B cell (primary cell): ENCODE measurements at regions of chr19 and their contacts with region 1.

Region 1: GRCh38 chr19:44093931-44094765 is at the start of gene ZNF224:
- DNase-seq: peak; percentile 87
- ATAC-seq: peak; percentile 94
- H3K4me3 ChIP-seq: peak within 1 kb of the TSS; percentile 67 to 95 (median 89)
- H3K4me3 Mint-ChIP-seq: peak within 1 kb of the TSS; percentile 96
- H3K27ac ChIP-seq: peak within 1 kb of the TSS; percentile 39 to 70
- H3K27ac Mint-ChIP-seq: peak within 1 kb of the TSS; percentile 90
- H3K4me1 ChIP-seq: peaks cover 4 to 9% of the 10 kb centered on the region in 2 donors
- H3K4me1 Mint-ChIP-seq: peaks cover 22% of the 10 kb centered on the region
- H3K27me3 ChIP-seq: no peaks in the 10 kb centered on the region
- H3K27me3 Mint-ChIP-seq: no peaks in the 10 kb centered on the region
- CTCF ChIP-seq: no peak
- total RNA-seq, gene ZNF224: 94.2 and 96.1 TPM in 2 replicates

Region 2: DNA sequence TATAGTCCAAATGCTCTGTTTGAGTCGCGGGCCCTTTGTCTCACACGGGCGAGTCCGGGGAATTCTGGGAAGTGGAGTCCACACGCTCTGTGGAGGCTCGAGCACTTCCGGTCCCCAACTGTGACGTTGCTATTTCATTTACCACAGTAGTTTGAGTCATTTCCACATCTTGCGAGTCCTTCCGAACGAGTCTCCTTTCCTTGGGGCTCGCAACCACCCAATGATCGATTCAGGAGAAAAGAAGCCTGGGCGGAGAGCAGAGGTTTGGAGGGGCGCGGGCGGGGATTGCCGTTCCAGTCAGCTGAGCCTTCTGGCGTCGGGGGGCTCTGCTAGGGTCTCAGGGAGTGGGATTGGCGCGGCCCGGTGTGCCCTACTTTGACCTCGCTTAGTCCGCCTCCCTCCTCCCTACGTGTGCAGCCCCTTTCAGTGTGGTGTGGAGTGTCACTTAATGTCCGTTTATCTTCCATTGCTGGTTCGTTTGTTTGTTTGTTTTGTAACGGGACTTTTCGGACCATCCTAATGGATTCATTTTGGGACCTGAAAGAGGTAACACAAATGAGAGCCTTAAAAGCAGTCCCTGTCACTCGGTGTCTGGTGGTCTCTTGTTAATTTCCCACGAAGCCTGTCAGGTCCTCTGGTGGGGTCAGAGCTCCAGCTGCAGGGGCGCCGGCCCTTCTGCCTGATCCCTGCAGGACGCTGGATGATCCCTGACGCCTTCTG is 68.8 kb before region 1 on chr19 and contains the start of gene ZNF222:
- CTCF ChIA-PET with region 1: no interaction called
- POLR2A ChIA-PET with region 1: no interaction called
- intact Hi-C with region 1: loop called (anchors 1 kb)
- DNase-seq: peak; percentile 83
- ATAC-seq: peak; percentile 97
- H3K4me3 ChIP-seq: peak within 1 kb of the TSS; percentile 72 to 98 (median 84)
- H3K4me3 Mint-ChIP-seq: peak within 1 kb of the TSS; percentile 96
- H3K27ac ChIP-seq: peak within 1 kb of the TSS; percentile 38 to 66
- H3K27ac Mint-ChIP-seq: peak within 1 kb of the TSS; percentile 88
- H3K4me1 ChIP-seq: peaks cover 11 to 13% of the 10 kb centered on the region in 2 donors
- H3K4me1 Mint-ChIP-seq: peaks cover 19% of the 10 kb centered on the region
- H3K27me3 ChIP-seq: no peaks in the 10 kb centered on the region
- H3K27me3 Mint-ChIP-seq: peaks cover 8% of the 10 kb centered on the region
- CTCF ChIP-seq: no peak
- total RNA-seq, gene ZNF222: 7.5 and 9.1 TPM in 2 replicates

Region 3: DNA sequence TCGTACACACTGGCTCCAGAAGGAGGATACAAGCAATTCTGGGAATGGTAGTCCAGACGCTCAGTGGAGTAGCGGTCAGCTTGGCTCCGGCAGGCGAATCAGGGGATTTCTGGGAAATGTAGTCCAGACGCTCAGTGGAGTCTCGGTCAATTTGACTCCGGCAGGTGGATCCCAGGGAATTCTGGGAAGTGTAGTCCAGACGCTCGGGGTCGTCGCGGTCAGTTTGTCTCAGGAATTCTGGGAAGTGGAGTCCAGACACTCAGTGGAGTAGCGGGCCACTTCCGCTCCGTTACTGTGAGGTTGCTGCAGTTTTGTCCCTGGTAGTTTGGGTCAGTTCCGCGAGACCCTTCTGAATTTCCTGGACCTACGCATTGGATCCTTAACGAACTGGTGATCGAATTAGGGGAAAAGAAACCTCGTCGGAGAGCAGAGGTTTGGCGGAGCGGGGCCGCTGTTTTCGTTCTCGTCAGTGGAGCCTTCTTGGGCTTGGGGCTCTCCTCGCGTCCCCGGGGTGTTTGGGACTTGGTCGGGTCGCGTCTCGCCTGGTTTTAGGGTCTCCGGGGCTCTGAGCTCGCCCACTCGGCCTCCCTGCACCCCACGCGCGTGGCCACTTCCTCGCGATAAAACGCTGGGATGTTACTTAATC is 19.1 kb after region 1 on chr19 and contains the start of gene ZNF225:
- CTCF ChIA-PET with region 1: interaction called, 3 read pairs
- POLR2A ChIA-PET with region 1: interaction called, 3 read pairs
- intact Hi-C with region 1: loop called (anchors 1 kb)
- DNase-seq: peak; percentile 91
- ATAC-seq: peak; percentile 95
- H3K4me3 ChIP-seq: peak within 1 kb of the TSS; percentile 71 to 98 (median 86)
- H3K4me3 Mint-ChIP-seq: peak within 1 kb of the TSS; percentile 99
- H3K27ac ChIP-seq: peak within 1 kb of the TSS; percentile 45 to 65
- H3K27ac Mint-ChIP-seq: peak within 1 kb of the TSS; percentile 90
- H3K4me1 ChIP-seq: peaks cover 9 to 19% of the 10 kb centered on the region in 2 donors
- H3K4me1 Mint-ChIP-seq: peaks cover 28% of the 10 kb centered on the region
- H3K27me3 ChIP-seq: no peaks in the 10 kb centered on the region
- H3K27me3 Mint-ChIP-seq: no peaks in the 10 kb centered on the region
- CTCF ChIP-seq: no peak
- total RNA-seq, gene ZNF225: 12.1 and 13.1 TPM in 2 replicates

Region 4: DNA sequence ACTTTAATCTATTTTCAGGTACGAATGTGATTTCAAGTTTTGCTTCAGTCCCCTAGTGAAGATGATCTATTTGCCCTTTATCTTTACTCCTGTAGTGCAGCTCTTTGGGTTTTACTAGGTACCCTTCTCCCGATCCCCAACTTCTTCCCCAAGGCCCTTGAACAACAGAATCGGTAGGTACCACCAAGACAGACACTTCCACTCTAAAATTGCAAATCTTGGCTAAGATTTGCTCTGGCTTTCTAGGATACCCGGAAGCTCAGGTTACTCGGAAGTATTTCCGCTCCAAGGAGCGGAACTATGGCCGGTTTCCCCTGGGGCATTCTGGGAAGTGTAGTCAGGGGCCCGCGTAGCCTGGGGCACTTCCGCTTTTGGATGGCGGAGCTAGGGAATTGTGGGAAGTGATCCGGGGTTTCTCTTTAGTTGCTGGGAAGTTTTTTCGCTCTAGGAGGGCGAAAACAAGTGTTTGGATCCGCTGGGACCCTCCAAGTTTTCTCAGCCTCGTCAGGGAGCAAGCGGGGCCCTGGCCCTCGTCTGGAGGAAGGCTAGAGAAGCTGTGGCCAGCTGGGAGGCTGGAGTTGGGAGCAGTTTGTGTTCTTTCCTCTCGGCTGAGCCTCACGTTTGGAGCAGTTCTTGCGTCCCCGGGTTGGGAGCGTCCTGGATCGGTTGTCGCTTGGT is 113.1 kb after region 1 on chr19:
- CTCF ChIA-PET with region 1: interaction called, 3 read pairs
- POLR2A ChIA-PET with region 1: interaction called, 8 read pairs
- intact Hi-C with region 1: loop called (anchors 2 kb)
- DNase-seq: peak; percentile 91
- ATAC-seq: peak; percentile 91
- H3K4me3 ChIP-seq: peak overlapping the region; percentile 70 to 93 (median 88)
- H3K4me3 Mint-ChIP-seq: peak overlapping the region; percentile 88
- H3K27ac ChIP-seq: peak overlapping the region; percentile 71 to 86
- H3K27ac Mint-ChIP-seq: peak overlapping the region; percentile 92
- H3K4me1 ChIP-seq: peaks cover 4 to 7% of the 10 kb centered on the region in 2 donors
- H3K4me1 Mint-ChIP-seq: peaks cover 11% of the 10 kb centered on the region
- H3K27me3 ChIP-seq: no peaks in the 10 kb centered on the region
- H3K27me3 Mint-ChIP-seq: peaks cover 13% of the 10 kb centered on the region
- CTCF ChIP-seq: no peak

Region 5: DNA sequence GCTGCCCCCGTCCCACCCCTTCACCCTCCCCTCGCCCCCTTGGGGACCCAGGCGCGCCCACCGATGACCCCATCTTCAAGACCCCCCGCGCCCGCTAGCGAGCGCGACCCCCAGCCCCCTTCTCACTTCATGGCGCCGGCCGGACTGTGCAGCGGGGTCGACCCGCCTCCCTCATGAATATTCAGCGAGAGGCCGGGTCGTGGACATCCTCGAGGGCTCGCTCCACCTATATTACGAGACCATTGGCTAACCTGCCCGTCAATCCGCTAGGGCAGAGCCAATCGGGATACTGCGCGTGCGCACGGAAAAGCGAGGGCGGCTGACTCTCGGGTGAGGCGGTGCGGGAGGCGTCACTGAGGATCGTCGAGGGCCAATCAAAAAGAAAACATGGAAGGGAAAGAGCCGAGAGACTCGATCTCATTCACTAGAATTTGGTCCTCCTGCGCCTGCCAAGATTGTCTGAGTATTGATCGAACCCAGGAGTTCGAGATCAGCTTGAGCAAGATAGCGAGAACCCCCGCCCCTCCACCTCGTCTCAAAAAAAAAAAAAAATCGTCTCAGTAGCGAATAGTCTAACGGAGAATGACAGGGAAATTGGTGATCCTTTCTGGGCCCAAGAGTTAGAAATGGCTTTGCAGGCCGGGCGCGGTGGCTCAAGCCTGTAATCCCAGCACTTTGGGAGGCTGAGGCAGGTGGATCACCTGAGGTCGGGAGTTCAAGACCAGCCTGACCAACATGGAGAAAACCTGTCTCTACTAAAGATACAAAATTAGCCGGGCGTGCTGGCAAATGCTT is 1276.5 kb after region 1 on chr19 and contains the start of gene ERCC2:
- CTCF ChIA-PET with region 1: no interaction called
- POLR2A ChIA-PET with region 1: interaction called, 14 read pairs
- intact Hi-C with region 1: no loop called
- DNase-seq: peak; percentile 99
- ATAC-seq: peak; percentile 97
- H3K4me3 ChIP-seq: peak within 1 kb of the TSS; percentile 55 to 83 (median 75)
- H3K4me3 Mint-ChIP-seq: peak within 1 kb of the TSS; percentile 94
- H3K27ac ChIP-seq: peak within 1 kb of the TSS; percentile 69 to 85
- H3K27ac Mint-ChIP-seq: peak within 1 kb of the TSS; percentile 92
- H3K4me1 ChIP-seq: peaks cover 3 to 12% of the 10 kb centered on the region in 2 donors
- H3K4me1 Mint-ChIP-seq: peaks cover 12% of the 10 kb centered on the region
- H3K27me3 ChIP-seq: no peaks in the 10 kb centered on the region
- H3K27me3 Mint-ChIP-seq: no peaks in the 10 kb centered on the region
- CTCF ChIP-seq: no peak
- total RNA-seq, gene ERCC2: 26.5 and 27.6 TPM in 2 replicates